ENCODE measurements at regions of chr5 and their contacts with region 1.

Region 1: GRCh38 chr5:11268891-11269290 is 507.9 kb upstream of the DAP start:
- DNase-seq: no peak
- H3K4me3 ChIP-seq: no peak overlapping the region
- H3K27ac ChIP-seq: no peak overlapping the region
- H3K4me1 ChIP-seq: no peaks in the 10 kb centered on the region
- H3K27me3 ChIP-seq: peaks cover 13% of the 10 kb centered on the region
- CTCF ChIP-seq: no peak

Region 2: GRCh38 chr5:11322133-11322532 is 53.2 kb after region 1 on chr5:
- intact Hi-C with region 1: no loop called
- DNase-seq: no peak
- H3K4me3 ChIP-seq: no peak overlapping the region
- H3K27ac ChIP-seq: no peak overlapping the region
- H3K4me1 ChIP-seq: no peaks in the 10 kb centered on the region
- H3K27me3 ChIP-seq: no peaks in the 10 kb centered on the region
- CTCF ChIP-seq: no peak

Region 3: GRCh38 chr5:11415751-11416150 is 146.9 kb after region 1 on chr5:
- intact Hi-C with region 1: no loop called
- DNase-seq: no peak
- H3K4me3 ChIP-seq: no peak overlapping the region
- H3K27ac ChIP-seq: no peak overlapping the region
- H3K4me1 ChIP-seq: no peaks in the 10 kb centered on the region
- H3K27me3 ChIP-seq: no peaks in the 10 kb centered on the region
- CTCF ChIP-seq: no peak

Region 4: GRCh38 chr5:11494340-11494739 is 225.4 kb after region 1 on chr5:
- intact Hi-C with region 1: loop called (anchors 10 kb)
- DNase-seq: no peak
- H3K4me3 ChIP-seq: no peak overlapping the region
- H3K27ac ChIP-seq: no peak overlapping the region
- H3K4me1 ChIP-seq: peaks cover 7% of the 10 kb centered on the region
- H3K27me3 ChIP-seq: no peaks in the 10 kb centered on the region
- CTCF ChIP-seq: peak; percentile 48